Right ventricle myocardium inferior (tissue), 1 donor: ENCODE measurements at regions of chr9 and their contacts with region 1.

Region 1: GRCh38 chr9:137423004-137423874 is at the starts of genes EXD3 and NOXA1:
- DNase-seq: peak; percentile 97
- ATAC-seq: peak; percentile 96
- total RNA-seq, gene EXD3: 6.8 TPM
- total RNA-seq, gene NOXA1: 2.2 TPM

Region 2: DNA sequence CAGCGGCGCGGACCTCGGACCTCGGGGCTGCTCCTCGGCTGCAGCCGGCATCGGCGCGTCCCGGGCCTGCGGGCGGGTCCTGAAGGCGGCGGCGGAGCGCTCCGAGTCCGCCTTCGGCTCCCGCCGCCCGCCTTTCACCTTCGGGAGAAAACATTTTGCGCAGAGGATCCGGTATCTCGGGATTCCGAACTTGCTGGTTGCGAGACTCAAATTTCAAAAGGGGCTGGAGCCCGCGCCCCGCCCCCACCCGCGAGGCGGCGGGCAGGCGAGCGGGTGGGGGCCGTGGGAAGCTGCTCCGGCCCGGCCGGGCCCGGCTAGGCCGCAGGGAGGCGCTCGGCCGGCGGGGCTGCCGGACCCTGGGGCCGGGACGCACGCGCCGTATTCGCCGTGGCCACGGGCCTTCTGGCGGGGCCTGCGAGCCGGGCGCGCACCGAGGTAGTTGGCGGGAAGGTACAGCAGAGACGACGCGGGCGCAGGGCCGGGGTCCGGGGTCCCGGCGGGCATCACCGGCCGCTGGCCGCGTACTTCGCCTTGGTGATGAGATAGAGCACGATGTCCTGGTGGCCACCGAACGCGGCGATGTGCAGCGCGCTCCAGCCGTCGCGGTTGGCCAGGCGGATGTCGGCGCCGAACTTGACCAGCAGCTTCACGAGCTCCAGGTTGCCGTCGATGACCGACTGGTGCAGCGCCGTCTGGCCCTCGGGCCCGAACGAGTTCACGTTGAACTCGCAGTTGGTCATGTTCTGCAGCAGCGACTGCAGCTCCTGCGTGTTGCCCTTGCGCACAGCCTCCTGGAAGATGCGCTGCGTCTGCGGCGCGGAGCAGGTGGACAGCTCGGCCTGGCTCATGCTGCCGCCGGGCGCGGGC is 121.9 kb before region 1 on chr9:
- intact Hi-C with region 1: loop called (anchors 2 kb)
- DNase-seq: peak; percentile 50
- ATAC-seq: no peak

Region 3: GRCh38 chr9:137370865-137371520 is 52.2 kb before region 1 on chr9:
- intact Hi-C with region 1: no loop called
- DNase-seq: no peak
- ATAC-seq: no peak

Region 4: DNA sequence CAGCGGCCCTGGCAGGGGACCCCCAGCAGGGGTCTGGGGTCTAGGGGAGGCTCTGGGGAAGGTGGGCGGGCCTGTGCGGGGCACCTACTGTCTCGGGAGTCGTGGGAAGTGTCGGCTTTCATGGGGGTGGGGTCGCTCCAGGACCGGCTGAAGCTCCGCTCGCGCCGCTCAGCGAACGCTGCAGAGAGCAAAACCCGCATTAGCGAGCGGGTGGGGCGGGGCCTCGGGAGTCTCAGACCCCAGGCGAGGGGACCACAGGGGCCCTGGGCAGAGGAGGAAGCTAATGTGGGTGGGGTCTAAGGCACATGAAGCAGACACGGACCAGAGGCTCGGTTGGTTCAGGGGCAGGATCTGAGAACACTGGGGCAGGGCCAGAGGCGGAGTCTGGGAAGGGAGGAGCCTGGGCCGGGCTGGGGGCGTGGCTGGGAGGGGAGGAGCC is 30.4 kb after region 1 on chr9:
- intact Hi-C with region 1: loop called (anchors 1 kb)
- DNase-seq: peak; percentile 86
- ATAC-seq: peak; percentile 62

Region 5: DNA sequence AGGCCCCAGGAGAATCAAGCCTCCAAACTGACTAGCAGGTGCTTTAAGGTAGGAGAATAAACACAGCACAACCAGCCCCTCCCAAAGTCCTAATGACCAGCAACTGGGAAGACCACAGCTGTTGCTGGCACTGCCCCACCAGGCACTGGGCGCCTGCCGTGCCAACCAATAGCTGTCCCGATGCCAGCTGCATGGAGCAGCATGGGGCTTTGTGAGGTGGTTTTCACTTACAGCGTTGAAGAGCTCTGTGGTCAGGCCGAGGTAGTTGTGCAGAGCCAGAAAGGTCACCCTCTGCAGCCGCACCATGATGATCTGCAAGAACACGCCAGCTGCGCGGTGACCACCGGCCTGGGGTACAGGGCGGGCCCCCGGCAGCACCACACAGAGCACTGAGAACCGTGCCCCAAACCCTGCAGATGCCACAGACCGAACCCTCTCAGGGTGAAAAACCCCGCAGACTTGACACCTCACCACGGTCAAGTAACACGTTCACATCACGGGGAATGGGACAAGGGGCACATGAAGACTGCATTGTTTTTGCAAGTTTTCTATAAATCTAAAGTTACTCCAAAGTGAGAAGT is 98.3 kb after region 1 on chr9:
- intact Hi-C with region 1: loop called (anchors 10 kb)
- DNase-seq: peak; percentile 72
- ATAC-seq: no peak